ENCODE measurements at regions of chr10 and their contacts with region 1.

Region 1: DNA sequence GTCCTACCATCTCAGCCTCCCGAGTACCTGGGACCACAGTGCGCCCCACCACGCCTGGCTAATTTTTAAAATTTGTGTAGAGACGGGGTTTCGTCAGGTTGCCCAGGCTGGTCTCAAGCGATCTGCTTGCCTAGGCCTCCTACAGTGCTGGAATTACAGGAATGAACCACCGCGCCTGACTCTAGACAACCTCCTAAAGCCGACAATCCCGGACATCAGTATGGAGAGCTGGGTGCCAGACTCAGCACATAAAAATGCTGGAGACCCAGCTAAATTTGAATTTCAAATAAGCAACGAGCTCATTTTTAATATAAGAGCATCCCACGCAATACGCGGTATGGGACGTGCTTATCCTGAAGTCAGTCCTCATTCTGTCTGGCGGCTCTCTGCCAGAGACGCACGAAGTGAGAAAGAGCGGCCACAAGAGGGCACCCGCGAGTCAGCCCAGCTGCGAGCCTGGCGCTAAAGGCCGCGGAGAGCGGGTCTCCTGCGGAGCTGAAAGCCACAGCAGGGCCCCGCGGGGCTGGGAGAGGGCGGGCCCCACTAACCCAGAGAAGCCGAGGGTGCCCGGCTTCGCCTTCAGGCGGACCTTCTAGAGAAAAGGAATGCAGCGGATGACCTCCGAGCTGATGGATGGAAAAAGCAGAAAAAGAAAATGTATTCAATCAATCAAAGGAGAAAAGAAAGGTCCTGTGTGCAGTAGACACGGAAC is 7.0 kb downstream of the CALY start:
- DNase-seq: peak; percentile 91
- ATAC-seq: peak; percentile 86
- H3K4me3 ChIP-seq: peak overlapping the region in 3 of 5 experiments; percentile 15 to 47 (median 38)
- H3K4me3 Mint-ChIP-seq: peak overlapping the region; percentile 44
- H3K27ac ChIP-seq: no peak overlapping the region
- H3K27ac Mint-ChIP-seq: no peak overlapping the region
- H3K4me1 ChIP-seq: peaks cover 28 to 42% of the 10 kb centered on the region in 2 donors
- H3K4me1 Mint-ChIP-seq: peaks cover 17% of the 10 kb centered on the region
- H3K27me3 ChIP-seq: peaks cover 0 to 55% (median 38%) of the 10 kb centered on the region in 4 experiments
- H3K27me3 Mint-ChIP-seq: peaks cover 43% of the 10 kb centered on the region
- CTCF ChIP-seq: peak; percentile 97

Region 2: GRCh38 chr10:133214468-133215410 is 114.9 kb before region 1 on chr10:
- CTCF ChIA-PET with region 1: no interaction called
- POLR2A ChIA-PET with region 1: no interaction called
- intact Hi-C with region 1: no loop called
- DNase-seq: no peak
- ATAC-seq: no peak
- H3K4me3 ChIP-seq: no peak overlapping the region
- H3K4me3 Mint-ChIP-seq: no peak overlapping the region
- H3K27ac ChIP-seq: no peak overlapping the region
- H3K27ac Mint-ChIP-seq: no peak overlapping the region
- H3K4me1 ChIP-seq: no peaks in the 10 kb centered on the region
- H3K4me1 Mint-ChIP-seq: no peaks in the 10 kb centered on the region
- H3K27me3 ChIP-seq: peaks cover 0 to 9% (median under 1%) of the 10 kb centered on the region in 4 experiments
- H3K27me3 Mint-ChIP-seq: peaks cover 17% of the 10 kb centered on the region
- CTCF ChIP-seq: no peak

Region 3: DNA sequence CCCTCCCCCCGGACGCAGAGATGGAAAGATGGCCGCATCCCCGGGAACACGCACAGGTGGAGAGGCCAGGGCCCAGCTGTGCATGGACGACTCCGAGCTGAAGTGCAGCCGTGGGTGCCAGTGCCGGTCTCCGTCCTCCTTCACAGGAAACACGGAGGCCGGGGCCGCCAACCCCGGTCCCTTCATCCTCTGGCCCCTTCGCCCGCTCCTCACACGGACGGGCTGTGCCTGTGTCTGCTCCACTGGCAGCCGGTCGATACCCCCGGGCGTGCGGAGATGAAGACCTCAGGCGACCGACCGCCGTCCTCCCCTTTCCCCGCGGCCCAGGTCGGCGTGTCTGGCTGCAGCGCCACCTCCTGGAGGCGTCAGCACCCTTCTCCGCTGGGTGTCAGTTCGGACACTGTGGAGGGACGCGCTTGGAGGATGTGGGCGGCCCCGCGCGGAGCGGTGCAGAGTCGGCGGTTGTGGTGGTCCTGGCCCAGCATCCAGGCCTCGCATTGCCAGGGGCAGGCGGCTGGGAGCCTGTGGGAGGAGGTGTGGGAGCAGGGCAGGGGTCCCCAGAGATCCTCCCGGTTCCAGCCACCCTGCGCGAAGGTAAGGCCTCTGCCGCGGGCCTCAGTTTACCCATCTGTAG is 11.0 kb before region 1 on chr10:
- CTCF ChIA-PET with region 1: interaction called, 21 read pairs
- POLR2A ChIA-PET with region 1: interaction called, 26 read pairs
- intact Hi-C with region 1: loop called (anchors 1 kb)
- DNase-seq: peak; percentile 77
- ATAC-seq: peak; percentile 92
- H3K4me3 ChIP-seq: peak overlapping the region in 4 of 5 experiments; percentile 18 to 44 (median 28)
- H3K4me3 Mint-ChIP-seq: peak overlapping the region; percentile 71
- H3K27ac ChIP-seq: no peak overlapping the region
- H3K27ac Mint-ChIP-seq: no peak overlapping the region
- H3K4me1 ChIP-seq: peaks cover 9 to 15% of the 10 kb centered on the region in 2 donors
- H3K4me1 Mint-ChIP-seq: peaks cover 18% of the 10 kb centered on the region
- H3K27me3 ChIP-seq: peaks cover 0 to 14% (median 7%) of the 10 kb centered on the region in 4 experiments
- H3K27me3 Mint-ChIP-seq: peaks cover 24% of the 10 kb centered on the region
- CTCF ChIP-seq: peak; percentile 92

Region 4: DNA sequence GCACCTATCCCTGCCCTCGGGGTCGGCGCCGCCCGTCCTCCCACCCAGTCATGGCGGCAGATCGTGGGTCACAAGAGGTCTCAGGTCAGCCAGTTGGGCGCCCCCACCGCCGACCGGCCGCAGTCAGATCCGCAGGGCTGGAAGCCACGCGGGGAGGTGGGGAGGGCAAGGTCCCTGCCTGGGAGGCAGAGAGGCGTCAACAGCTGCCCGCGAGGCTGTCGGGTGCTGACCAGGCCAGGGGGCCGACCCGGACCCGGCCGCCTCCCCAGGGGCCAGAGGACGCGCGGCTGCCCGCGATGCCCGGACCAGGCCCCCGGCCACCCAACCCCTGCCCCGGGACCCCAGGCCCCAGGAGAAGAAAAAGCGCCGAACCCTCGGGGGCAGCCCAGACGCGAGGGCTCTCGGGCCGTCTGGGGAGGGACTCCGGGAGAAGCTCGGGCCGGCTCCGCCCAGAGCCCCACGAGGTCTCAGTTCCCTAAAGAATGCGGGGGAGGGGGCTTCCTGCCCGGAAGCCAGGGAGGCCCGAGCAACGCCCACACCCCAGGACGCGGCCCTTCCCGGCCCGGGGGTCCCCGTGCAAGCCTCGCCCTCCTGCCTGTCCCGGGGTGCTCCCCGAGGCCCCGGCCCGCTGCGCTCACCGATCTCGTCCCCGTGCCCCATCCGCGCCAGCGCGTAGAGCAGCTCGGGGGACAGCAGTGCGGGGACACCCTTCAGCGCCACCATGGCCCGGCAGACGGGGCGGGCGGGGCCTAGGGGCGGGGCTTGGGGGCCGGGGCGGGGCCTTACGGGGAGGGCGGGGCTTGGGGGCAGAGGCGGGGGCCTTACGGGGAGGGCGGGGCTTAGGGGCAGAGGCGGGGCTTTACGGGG is 27.9 kb after region 1 on chr10 and contains the start of gene FUOM:
- CTCF ChIA-PET with region 1: interaction called, 18 read pairs
- POLR2A ChIA-PET with region 1: interaction called, 3 read pairs
- intact Hi-C with region 1: no loop called
- DNase-seq: peak; percentile 89
- ATAC-seq: peak; percentile 85
- H3K4me3 ChIP-seq: peak within 1 kb of the TSS in 4 of 5 experiments; percentile 57 to 87 (median 68)
- H3K4me3 Mint-ChIP-seq: peak within 1 kb of the TSS; percentile 80
- H3K27ac ChIP-seq: peak within 1 kb of the TSS in 1 of 2 donors; percentile 71
- H3K27ac Mint-ChIP-seq: peak within 1 kb of the TSS; percentile 26
- H3K4me1 ChIP-seq: peaks cover 20 to 39% of the 10 kb centered on the region in 2 donors
- H3K4me1 Mint-ChIP-seq: peaks cover 32% of the 10 kb centered on the region
- H3K27me3 ChIP-seq: no peaks in the 10 kb centered on the region
- H3K27me3 Mint-ChIP-seq: no peaks in the 10 kb centered on the region
- CTCF ChIP-seq: no peak
- total RNA-seq, gene FUOM: 20.7 and 23.8 TPM in 2 replicates

Region 5: GRCh38 chr10:133400624-133401424 is 71.2 kb after region 1 on chr10:
- CTCF ChIA-PET with region 1: interaction called, 13 read pairs
- POLR2A ChIA-PET with region 1: no interaction called
- intact Hi-C with region 1: no loop called
- DNase-seq: peak; percentile 41
- ATAC-seq: peak; percentile 54
- H3K4me3 ChIP-seq: peak overlapping the region in 2 of 5 experiments; percentile 2 to 5
- H3K4me3 Mint-ChIP-seq: peak overlapping the region; percentile 53
- H3K27ac ChIP-seq: peak overlapping the region in 1 of 2 donors; percentile 42
- H3K27ac Mint-ChIP-seq: peak overlapping the region; percentile 54
- H3K4me1 ChIP-seq: peaks cover 19 to 20% of the 10 kb centered on the region in 2 donors
- H3K4me1 Mint-ChIP-seq: peaks cover 48% of the 10 kb centered on the region
- H3K27me3 ChIP-seq: no peaks in the 10 kb centered on the region
- H3K27me3 Mint-ChIP-seq: no peaks in the 10 kb centered on the region
- CTCF ChIP-seq: no peak

Region 6: GRCh38 chr10:133438711-133439273 is 109.1 kb after region 1 on chr10:
- CTCF ChIA-PET with region 1: interaction called, 22 read pairs
- POLR2A ChIA-PET with region 1: no interaction called
- intact Hi-C with region 1: no loop called
- DNase-seq: peak; percentile 9
- ATAC-seq: no peak
- H3K4me3 ChIP-seq: no peak overlapping the region
- H3K4me3 Mint-ChIP-seq: no peak overlapping the region
- H3K27ac ChIP-seq: no peak overlapping the region
- H3K27ac Mint-ChIP-seq: no peak overlapping the region
- H3K4me1 ChIP-seq: peaks cover 0 to 7% of the 10 kb centered on the region in 2 donors
- H3K4me1 Mint-ChIP-seq: peaks cover 5% of the 10 kb centered on the region
- H3K27me3 ChIP-seq: peaks cover 0 to 2% (median 0%) of the 10 kb centered on the region in 4 experiments
- H3K27me3 Mint-ChIP-seq: peaks cover 5% of the 10 kb centered on the region
- CTCF ChIP-seq: peak; percentile 29

Region 7: DNA sequence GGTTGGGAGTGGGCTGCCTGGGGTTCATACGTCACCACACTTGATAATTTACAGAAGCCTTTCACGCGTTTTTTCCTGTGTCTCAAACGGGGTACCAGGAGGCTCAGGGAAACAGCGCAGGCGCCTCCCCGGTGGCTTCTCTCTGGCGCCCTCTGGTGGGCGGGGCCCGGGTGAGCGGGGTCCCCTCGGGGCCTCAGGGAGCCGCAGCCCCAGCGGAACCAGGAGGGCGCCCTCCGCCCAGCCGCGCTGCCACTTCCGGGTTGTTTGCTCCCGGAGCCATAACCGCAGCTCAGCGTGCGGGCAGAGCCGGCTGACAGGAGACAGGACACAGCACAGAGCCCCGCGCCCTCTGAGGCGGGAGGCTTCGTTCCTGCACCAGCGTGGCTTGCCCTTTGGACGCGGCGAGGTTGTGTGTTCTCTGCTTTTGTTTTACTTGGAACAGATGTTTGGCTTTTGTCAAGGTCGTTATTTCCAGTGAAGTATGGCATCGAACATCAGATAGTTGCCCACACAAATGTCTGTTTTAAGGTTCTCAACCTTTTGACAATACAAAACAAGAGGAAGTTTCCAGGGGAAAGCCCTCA is 190.6 kb after region 1 on chr10:
- CTCF ChIA-PET with region 1: interaction called, 32 read pairs
- POLR2A ChIA-PET with region 1: no interaction called
- intact Hi-C with region 1: loop called (anchors 1 kb)
- DNase-seq: peak; percentile 88
- ATAC-seq: peak; percentile 100
- H3K4me3 ChIP-seq: peak overlapping the region; percentile 9 to 65 (median 52)
- H3K4me3 Mint-ChIP-seq: peak overlapping the region; percentile 70
- H3K27ac ChIP-seq: no peak overlapping the region
- H3K27ac Mint-ChIP-seq: no peak overlapping the region
- H3K4me1 ChIP-seq: peaks cover 4 to 12% of the 10 kb centered on the region in 2 donors
- H3K4me1 Mint-ChIP-seq: peaks cover 13% of the 10 kb centered on the region
- H3K27me3 ChIP-seq: no peaks in the 10 kb centered on the region
- H3K27me3 Mint-ChIP-seq: peaks cover 16% of the 10 kb centered on the region
- CTCF ChIP-seq: peak; percentile 95